ENCODE measurements at regions of chr12 and their contacts with region 1.

Region 1: GRCh38 chr12:95217377-95218149 is at the starts of genes FGD6 and VEZT:
- DNase-seq: peak; percentile 98 to 100 (median 98)
- H3K4me3 ChIP-seq: peak within 1 kb of the TSS; percentile 87 to 97
- H3K4me3 Mint-ChIP-seq: peak within 1 kb of the TSS; percentile 94 to 100 (median 96)
- H3K27ac ChIP-seq: peak within 1 kb of the TSS; percentile 97
- H3K27ac Mint-ChIP-seq: peak within 1 kb of the TSS; percentile 92 to 100 (median 97)
- H3K4me1 ChIP-seq: peaks cover 34% of the 10 kb centered on the region
- H3K4me1 Mint-ChIP-seq: peaks cover 23 to 45% (median 34%) of the 10 kb centered on the region in 4 donors
- H3K27me3 ChIP-seq: no peaks in the 10 kb centered on the region
- H3K27me3 Mint-ChIP-seq: peaks cover 0 to 1% of the 10 kb centered on the region in 2 donors
- total RNA-seq, gene FGD6: 0.69 to 0.70 TPM
- total RNA-seq, gene VEZT: 43.9 to 49.4 TPM

Region 2: DNA sequence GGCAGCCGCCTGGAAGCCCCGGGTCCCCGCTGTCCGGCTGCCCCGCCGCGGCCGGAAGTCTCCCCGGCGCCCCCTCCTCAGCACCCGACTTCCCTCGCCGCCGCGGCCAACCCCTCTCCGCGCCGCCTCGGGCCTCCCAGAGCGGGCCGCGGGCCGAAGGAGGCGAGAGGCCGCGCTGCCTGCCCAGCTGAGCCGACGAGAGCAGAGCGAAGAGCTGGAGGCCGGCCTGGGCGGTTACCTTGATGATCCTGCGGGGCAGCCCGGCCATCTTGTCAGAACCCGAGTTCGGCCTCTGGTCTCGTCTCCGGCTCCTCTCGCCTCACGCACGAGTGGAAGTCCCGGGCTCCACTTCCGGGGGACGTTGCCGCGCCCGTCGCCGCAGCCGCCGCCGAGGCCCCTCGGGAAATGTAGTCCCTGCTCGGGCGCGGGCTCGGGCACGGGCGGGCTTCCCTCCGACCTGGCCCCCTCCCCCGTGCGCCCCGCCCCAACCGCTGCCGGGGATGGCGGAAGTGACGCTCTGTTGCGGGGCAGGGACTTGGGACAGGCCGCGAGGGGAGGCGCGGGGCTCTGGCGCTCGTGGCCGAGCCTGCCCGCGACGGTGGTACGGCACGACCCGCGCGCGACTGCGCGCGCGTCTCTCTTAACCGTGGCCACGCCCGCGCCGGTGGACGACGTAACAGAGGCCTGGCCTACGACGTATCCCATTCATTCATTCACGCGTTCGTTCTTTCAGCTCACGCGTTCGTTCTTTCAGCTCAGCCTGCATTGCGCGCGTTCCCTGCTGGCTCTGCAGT is 1775.7 kb before region 1 on chr12 and contains the start of gene UBE2N:
- CTCF ChIA-PET with region 1: no interaction called
- POLR2A ChIA-PET with region 1: no interaction called
- intact Hi-C with region 1: loop called (anchors 5 kb)
- DNase-seq: peak; percentile 95 to 97 (median 97)
- H3K4me3 ChIP-seq: peak within 1 kb of the TSS; percentile 90 to 98
- H3K4me3 Mint-ChIP-seq: peak within 1 kb of the TSS; percentile 94 to 98 (median 97)
- H3K27ac ChIP-seq: peak within 1 kb of the TSS; percentile 95
- H3K27ac Mint-ChIP-seq: peak within 1 kb of the TSS; percentile 94 to 100 (median 99)
- H3K4me1 ChIP-seq: peaks cover 48% of the 10 kb centered on the region
- H3K4me1 Mint-ChIP-seq: peaks cover 36 to 51% (median 45%) of the 10 kb centered on the region in 4 donors
- H3K27me3 ChIP-seq: no peaks in the 10 kb centered on the region
- H3K27me3 Mint-ChIP-seq: no peaks in the 10 kb centered on the region
- total RNA-seq, gene UBE2N: 71.2 to 72.8 TPM

Region 3: DNA sequence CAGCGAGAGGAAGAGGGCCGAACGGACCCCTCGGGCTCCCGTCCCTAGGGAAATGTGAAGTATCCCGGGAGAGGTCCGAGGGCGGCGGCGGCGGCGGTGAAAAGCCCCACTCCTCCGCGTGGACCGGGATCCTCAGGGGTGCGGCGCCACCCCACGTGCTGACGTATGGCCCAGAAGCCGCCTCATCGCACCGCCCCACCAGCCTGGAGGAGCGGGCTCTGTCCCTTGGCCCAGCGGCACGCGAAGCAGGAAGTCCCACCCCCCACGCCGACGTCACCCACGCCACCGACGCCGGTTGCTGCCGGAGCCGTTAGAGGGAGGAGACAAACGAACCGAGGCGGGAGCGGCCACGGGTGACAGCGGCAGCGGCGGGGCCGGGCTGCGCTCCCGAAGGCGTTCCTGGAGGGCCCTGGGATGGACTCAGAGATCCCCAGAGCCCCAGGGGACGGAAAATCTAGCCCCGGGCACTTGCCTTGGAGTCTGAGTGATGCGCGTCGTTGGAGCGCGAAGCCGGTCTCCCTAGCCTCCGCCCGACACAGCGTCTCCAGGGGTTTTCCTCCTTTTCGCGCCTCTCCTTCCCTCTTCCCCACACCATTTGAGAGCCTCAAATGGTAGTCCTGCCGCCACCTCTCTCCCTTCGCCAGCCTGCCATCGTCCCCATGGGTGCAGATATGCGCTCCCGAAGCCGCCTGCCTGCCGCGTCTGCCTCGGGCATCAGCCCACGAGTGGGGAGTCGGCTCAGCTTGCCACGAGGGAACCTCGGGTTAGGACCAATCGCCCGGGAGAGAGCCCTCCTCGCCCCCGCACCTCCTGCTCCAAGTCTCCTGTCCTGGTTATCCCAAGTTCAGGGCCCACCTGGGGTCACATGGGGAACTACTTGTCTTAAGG is 757.6 kb before region 1 on chr12 and contains the start of gene CEP83:
- CTCF ChIA-PET with region 1: no interaction called
- POLR2A ChIA-PET with region 1: interaction called, 3 read pairs
- intact Hi-C with region 1: loop called (anchors 10 kb)
- DNase-seq: peak; percentile 93 to 97 (median 95)
- H3K4me3 ChIP-seq: peak within 1 kb of the TSS; percentile 89 to 98
- H3K4me3 Mint-ChIP-seq: peak within 1 kb of the TSS; percentile 94 to 98 (median 96)
- H3K27ac ChIP-seq: peak within 1 kb of the TSS; percentile 82
- H3K27ac Mint-ChIP-seq: peak within 1 kb of the TSS; percentile 93 to 98 (median 96)
- H3K4me1 ChIP-seq: peaks cover 15% of the 10 kb centered on the region
- H3K4me1 Mint-ChIP-seq: peaks cover 17 to 47% (median 25%) of the 10 kb centered on the region in 4 donors
- H3K27me3 ChIP-seq: no peaks in the 10 kb centered on the region
- H3K27me3 Mint-ChIP-seq: peaks cover 8% of the 10 kb centered on the region in 2 donors
- total RNA-seq, gene CEP83: 11.2 to 14.8 TPM

Region 4: DNA sequence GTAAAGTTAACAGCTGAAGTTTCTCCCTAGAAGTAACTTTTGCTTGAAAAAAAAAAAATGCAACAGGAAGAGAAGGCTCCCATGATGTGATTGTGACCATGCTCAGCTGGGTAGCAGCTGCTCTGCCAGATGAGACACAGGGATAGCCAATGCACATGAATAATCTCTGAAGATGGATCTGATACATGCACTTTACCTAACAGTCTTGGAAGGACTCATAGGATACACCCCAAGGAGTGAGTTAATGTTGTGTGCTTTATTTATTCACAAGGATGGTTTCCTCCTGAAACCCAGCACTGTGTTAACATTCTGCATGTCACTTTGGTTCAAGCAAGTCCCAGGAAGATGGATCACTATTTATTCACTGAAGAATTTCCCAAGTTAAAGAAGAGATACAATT is 260.6 kb before region 1 on chr12:
- CTCF ChIA-PET with region 1: no interaction called
- POLR2A ChIA-PET with region 1: no interaction called
- intact Hi-C with region 1: no loop called
- DNase-seq: no peak
- H3K4me3 ChIP-seq: no peak overlapping the region
- H3K4me3 Mint-ChIP-seq: no peak overlapping the region
- H3K27ac ChIP-seq: no peak overlapping the region
- H3K27ac Mint-ChIP-seq: peak overlapping the region in 1 of 7 donors; percentile 67
- H3K4me1 ChIP-seq: no peaks in the 10 kb centered on the region
- H3K4me1 Mint-ChIP-seq: peaks cover 0 to 3% (median 0%) of the 10 kb centered on the region in 4 donors
- H3K27me3 ChIP-seq: no peaks in the 10 kb centered on the region
- H3K27me3 Mint-ChIP-seq: peaks cover 5 to 8% of the 10 kb centered on the region in 2 donors

Region 5: GRCh38 chr12:95117178-95117599 is 100.4 kb before region 1 on chr12:
- CTCF ChIA-PET with region 1: interaction called, 7 read pairs
- POLR2A ChIA-PET with region 1: no interaction called
- intact Hi-C with region 1: loop called (anchors 1 kb)
- DNase-seq: peak; percentile 63 to 72 (median 66)
- H3K4me3 ChIP-seq: no peak overlapping the region
- H3K4me3 Mint-ChIP-seq: no peak overlapping the region
- H3K27ac ChIP-seq: no peak overlapping the region
- H3K27ac Mint-ChIP-seq: no peak overlapping the region
- H3K4me1 ChIP-seq: no peaks in the 10 kb centered on the region
- H3K4me1 Mint-ChIP-seq: no peaks in the 10 kb centered on the region
- H3K27me3 ChIP-seq: no peaks in the 10 kb centered on the region
- H3K27me3 Mint-ChIP-seq: no peaks in the 10 kb centered on the region

Region 6: GRCh38 chr12:95532851-95533250 is 315.3 kb after region 1 on chr12:
- CTCF ChIA-PET with region 1: interaction called, 14 read pairs
- POLR2A ChIA-PET with region 1: no interaction called
- intact Hi-C with region 1: loop called (anchors 1 kb)
- DNase-seq: no peak
- H3K4me3 ChIP-seq: no peak overlapping the region
- H3K4me3 Mint-ChIP-seq: no peak overlapping the region
- H3K27ac ChIP-seq: no peak overlapping the region
- H3K27ac Mint-ChIP-seq: no peak overlapping the region
- H3K4me1 ChIP-seq: no peaks in the 10 kb centered on the region
- H3K4me1 Mint-ChIP-seq: peaks cover 0 to 2% (median under 1%) of the 10 kb centered on the region in 4 donors
- H3K27me3 ChIP-seq: no peaks in the 10 kb centered on the region
- H3K27me3 Mint-ChIP-seq: no peaks in the 10 kb centered on the region

Region 7: GRCh38 chr12:95942524-95943329 is 725.2 kb after region 1 on chr12 and contains the start of gene CCDC38:
- CTCF ChIA-PET with region 1: no interaction called
- POLR2A ChIA-PET with region 1: no interaction called
- intact Hi-C with region 1: loop called (anchors 2 kb)
- DNase-seq: peak; percentile 79 to 87 (median 84)
- H3K4me3 ChIP-seq: peak within 1 kb of the TSS; percentile 69 to 92
- H3K4me3 Mint-ChIP-seq: peak within 1 kb of the TSS; percentile 92 to 97 (median 95)
- H3K27ac ChIP-seq: peak within 1 kb of the TSS; percentile 70
- H3K27ac Mint-ChIP-seq: peak within 1 kb of the TSS; percentile 86 to 97 (median 93)
- H3K4me1 ChIP-seq: peaks cover 12% of the 10 kb centered on the region
- H3K4me1 Mint-ChIP-seq: peaks cover 5 to 12% (median 7%) of the 10 kb centered on the region in 4 donors
- H3K27me3 ChIP-seq: no peaks in the 10 kb centered on the region
- H3K27me3 Mint-ChIP-seq: no peaks in the 10 kb centered on the region
- total RNA-seq, gene CCDC38: 0.23 to 1.0 TPM

Region 8: GRCh38 chr12:96906849-96907670 is 1689.5 kb after region 1 on chr12 and contains the start of gene NEDD1:
- CTCF ChIA-PET with region 1: no interaction called
- POLR2A ChIA-PET with region 1: no interaction called
- intact Hi-C with region 1: loop called (anchors 5 kb)
- DNase-seq: peak; percentile 81 to 86 (median 82)
- H3K4me3 ChIP-seq: peak within 1 kb of the TSS; percentile 80 to 97
- H3K4me3 Mint-ChIP-seq: peak within 1 kb of the TSS; percentile 93 to 98 (median 96)
- H3K27ac ChIP-seq: peak within 1 kb of the TSS; percentile 96
- H3K27ac Mint-ChIP-seq: peak within 1 kb of the TSS; percentile 94 to 99 (median 99)
- H3K4me1 ChIP-seq: peaks cover 46% of the 10 kb centered on the region
- H3K4me1 Mint-ChIP-seq: peaks cover 37 to 55% (median 44%) of the 10 kb centered on the region in 4 donors
- H3K27me3 ChIP-seq: no peaks in the 10 kb centered on the region
- H3K27me3 Mint-ChIP-seq: peaks cover 0 to 2% of the 10 kb centered on the region in 2 donors
- total RNA-seq, gene NEDD1: 24.6 to 27.9 TPM

Measured in CD4-positive, alpha-beta memory T cell (primary cell).